CD4-positive, alpha-beta T cell (primary cell): ENCODE measurements at regions of chr3 and their contacts with region 1.

Region 1: GRCh38 chr3:168165390-168166269 is 69.9 kb upstream of the GOLIM4 start:
- DNase-seq: peak in 4 of 14 experiments; percentile 4 to 52 (median 30)
- ATAC-seq: no peak
- H3K4me3 ChIP-seq: no peak overlapping the region
- H3K4me3 Mint-ChIP-seq: no peak overlapping the region
- H3K27ac ChIP-seq: no peak overlapping the region
- H3K27ac Mint-ChIP-seq: no peak overlapping the region
- H3K4me1 ChIP-seq: no peaks in the 10 kb centered on the region
- H3K4me1 Mint-ChIP-seq: no peaks in the 10 kb centered on the region
- H3K27me3 ChIP-seq: no peaks in the 10 kb centered on the region
- H3K27me3 Mint-ChIP-seq: no peaks in the 10 kb centered on the region
- CTCF ChIP-seq: peak; percentile 40

Region 2: DNA sequence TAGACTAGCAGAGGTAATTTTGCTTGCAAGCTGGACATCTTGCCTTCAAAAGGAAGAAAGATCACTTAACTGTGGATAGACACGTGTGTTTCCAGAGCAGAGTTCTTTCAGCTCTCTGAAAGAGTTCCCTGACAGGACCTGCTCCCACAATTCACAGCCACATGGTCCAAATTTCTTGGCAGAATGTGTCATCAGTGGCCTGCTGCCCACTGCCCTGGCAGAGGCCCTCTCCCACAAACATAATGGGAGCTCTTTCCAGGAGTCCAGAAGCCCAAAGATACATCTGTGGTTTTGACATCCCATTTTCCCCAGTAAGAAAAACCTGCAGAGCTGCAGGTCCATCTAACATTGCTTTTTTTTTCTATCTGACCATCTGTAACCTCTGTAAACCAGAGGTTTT is 381.8 kb before region 1 on chr3:
- CTCF ChIA-PET with region 1: no interaction called
- POLR2A ChIA-PET with region 1: no interaction called
- intact Hi-C with region 1: no loop called
- DNase-seq: no peak
- ATAC-seq: no peak
- H3K4me3 ChIP-seq: no peak overlapping the region
- H3K4me3 Mint-ChIP-seq: no peak overlapping the region
- H3K27ac ChIP-seq: no peak overlapping the region
- H3K27ac Mint-ChIP-seq: no peak overlapping the region
- H3K4me1 ChIP-seq: no peaks in the 10 kb centered on the region
- H3K4me1 Mint-ChIP-seq: no peaks in the 10 kb centered on the region
- H3K27me3 ChIP-seq: no peaks in the 10 kb centered on the region
- H3K27me3 Mint-ChIP-seq: no peaks in the 10 kb centered on the region
- CTCF ChIP-seq: no peak

Region 3: DNA sequence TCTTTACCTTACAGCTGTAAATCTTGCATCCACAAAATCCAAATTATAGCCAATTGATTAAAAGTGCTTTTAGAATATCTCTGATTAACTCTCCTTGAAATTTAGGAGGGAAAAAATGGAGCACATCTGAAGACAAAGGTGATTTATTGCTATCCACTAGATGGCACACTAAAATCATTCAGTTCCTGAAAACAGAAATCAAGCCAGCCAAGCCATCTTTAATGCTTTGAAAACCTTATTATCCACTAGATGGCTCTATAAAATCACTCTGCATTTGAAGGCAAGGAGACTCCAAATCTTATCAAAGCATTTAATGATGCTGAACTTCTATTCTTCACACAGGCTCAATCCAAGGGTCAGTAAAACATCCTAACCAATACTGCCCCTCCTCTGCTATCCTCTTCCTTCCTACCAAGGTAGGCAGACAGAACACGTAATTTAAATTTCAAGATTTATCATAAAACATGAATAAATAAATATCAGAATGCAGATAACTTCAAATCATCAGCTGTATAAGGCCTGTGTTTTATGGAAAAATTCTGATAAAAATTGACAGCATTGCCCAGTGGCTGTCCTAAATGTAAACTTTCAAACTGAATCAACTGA is 118.3 kb before region 1 on chr3:
- CTCF ChIA-PET with region 1: no interaction called
- POLR2A ChIA-PET with region 1: no interaction called
- intact Hi-C with region 1: loop called in 1 of 2 experiments (anchors 5 kb)
- DNase-seq: peak in 3 of 14 experiments; percentile 34 to 54 (median 52)
- ATAC-seq: peak; percentile 51
- H3K4me3 ChIP-seq: no peak overlapping the region
- H3K4me3 Mint-ChIP-seq: no peak overlapping the region
- H3K27ac ChIP-seq: no peak overlapping the region
- H3K27ac Mint-ChIP-seq: no peak overlapping the region
- H3K4me1 ChIP-seq: no peaks in the 10 kb centered on the region
- H3K4me1 Mint-ChIP-seq: no peaks in the 10 kb centered on the region
- H3K27me3 ChIP-seq: no peaks in the 10 kb centered on the region
- H3K27me3 Mint-ChIP-seq: no peaks in the 10 kb centered on the region
- CTCF ChIP-seq: peak; percentile 32

Region 4: DNA sequence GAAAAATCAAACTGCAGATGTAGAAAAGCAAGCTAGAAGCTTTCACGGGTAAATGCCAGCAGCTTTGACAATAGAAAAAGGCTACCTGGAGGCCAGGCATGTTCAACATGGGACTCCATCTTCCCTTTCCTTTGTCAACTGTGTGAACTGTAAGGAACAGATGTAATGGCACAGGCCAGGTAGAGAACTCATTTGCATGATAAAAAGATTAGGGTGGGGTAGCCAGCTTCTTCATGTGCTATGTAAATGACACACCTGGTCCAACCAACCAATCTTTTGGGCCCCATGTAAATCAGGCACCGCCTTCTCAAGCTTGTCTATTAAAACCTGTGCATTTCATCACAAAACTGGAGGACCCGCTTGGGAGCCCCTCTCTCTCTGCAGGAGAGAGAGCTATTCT is 616.6 kb after region 1 on chr3:
- CTCF ChIA-PET with region 1: no interaction called
- POLR2A ChIA-PET with region 1: no interaction called
- intact Hi-C with region 1: no loop called
- DNase-seq: no peak
- ATAC-seq: no peak
- H3K4me3 ChIP-seq: no peak overlapping the region
- H3K4me3 Mint-ChIP-seq: no peak overlapping the region
- H3K27ac ChIP-seq: no peak overlapping the region
- H3K27ac Mint-ChIP-seq: no peak overlapping the region
- H3K4me1 ChIP-seq: no peaks in the 10 kb centered on the region
- H3K4me1 Mint-ChIP-seq: no peaks in the 10 kb centered on the region
- H3K27me3 ChIP-seq: no peaks in the 10 kb centered on the region
- H3K27me3 Mint-ChIP-seq: no peaks in the 10 kb centered on the region
- CTCF ChIP-seq: no peak